ENCODE measurements at regions of chr7 and their contacts with region 1.

Region 1: DNA sequence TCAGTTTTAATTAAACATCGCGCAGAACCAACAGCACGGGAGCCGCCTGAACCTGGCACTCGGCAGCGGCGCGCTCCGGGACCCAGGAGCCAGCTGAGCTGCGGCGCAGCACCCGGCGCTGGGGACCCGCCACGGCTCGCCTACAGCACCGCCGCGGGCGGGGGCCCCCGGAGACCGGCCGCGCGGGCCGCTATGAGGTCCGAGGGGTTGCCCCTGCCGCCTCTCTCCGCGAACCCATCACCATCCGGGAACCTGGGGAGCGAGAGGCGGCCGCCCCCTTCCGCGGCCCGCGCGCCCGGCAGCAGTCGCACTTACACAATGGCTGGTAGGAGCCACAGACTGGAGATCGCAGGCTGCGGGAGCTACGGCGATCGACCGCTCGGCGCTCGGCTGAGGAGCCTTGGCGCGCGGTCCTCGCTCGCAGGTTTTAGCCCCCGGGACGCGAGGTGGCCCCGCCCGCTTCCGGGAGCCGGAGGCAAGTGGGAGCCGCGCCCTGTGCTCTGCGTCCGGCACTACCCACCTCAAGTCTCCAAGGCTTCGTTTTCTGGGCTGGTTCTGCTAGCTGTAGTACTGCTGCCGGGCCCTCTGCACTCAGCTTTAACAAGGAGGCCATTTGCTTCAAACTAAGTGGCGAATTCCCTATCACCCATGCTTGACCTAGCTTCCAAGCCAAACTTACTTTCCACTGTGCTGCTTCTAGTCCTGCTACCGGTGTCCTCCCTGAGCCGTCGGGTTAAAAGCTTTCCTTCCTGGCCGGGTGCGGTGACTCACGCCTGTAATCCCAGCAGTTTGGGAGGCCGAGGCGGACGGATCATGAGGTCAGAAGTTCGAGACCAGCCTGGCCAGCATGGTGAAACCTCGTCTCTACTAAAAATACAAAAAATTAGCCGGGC is at the start of gene TPK1:
- DNase-seq: peak; percentile 81 to 94 (median 89)
- ATAC-seq: peak; percentile 79 to 90
- H3K4me3 Mint-ChIP-seq: peak within 1 kb of the TSS; percentile 91 to 99 (median 98)
- H3K27ac Mint-ChIP-seq: peak within 1 kb of the TSS; percentile 98 to 99 (median 99)
- H3K4me1 Mint-ChIP-seq: peaks cover 9 to 44% (median 38%) of the 10 kb centered on the region in 4 donors
- H3K27me3 Mint-ChIP-seq: no peaks in the 10 kb centered on the region
- polyA plus RNA-seq, gene TPK1: 26.1 to 26.6 (median 26.2) TPM

Region 2: GRCh38 chr7:144771174-144771573 is 64.7 kb before region 1 on chr7:
- POLR2A ChIA-PET with region 1: interaction called, 21 read pairs
- DNase-seq: no peak
- ATAC-seq: no peak
- H3K4me3 Mint-ChIP-seq: no peak overlapping the region
- H3K27ac Mint-ChIP-seq: no peak overlapping the region
- H3K4me1 Mint-ChIP-seq: peaks cover 24 to 37% (median 31%) of the 10 kb centered on the region in 4 donors
- H3K27me3 Mint-ChIP-seq: no peaks in the 10 kb centered on the region

Region 3: GRCh38 chr7:144796919-144797318 is 39.0 kb before region 1 on chr7:
- POLR2A ChIA-PET with region 1: interaction called, 19 read pairs
- DNase-seq: no peak
- ATAC-seq: no peak
- H3K4me3 Mint-ChIP-seq: no peak overlapping the region
- H3K27ac Mint-ChIP-seq: peak overlapping the region in 1 of 10 donors; percentile 18
- H3K4me1 Mint-ChIP-seq: peaks cover 27 to 56% (median 37%) of the 10 kb centered on the region in 4 donors
- H3K27me3 Mint-ChIP-seq: no peaks in the 10 kb centered on the region

Region 4: GRCh38 chr7:144812379-144813283 is 23.3 kb before region 1 on chr7:
- POLR2A ChIA-PET with region 1: interaction called, 307 read pairs
- DNase-seq: peak in 9 of 10 donors; percentile 27 to 79 (median 63)
- ATAC-seq: peak; percentile 94 to 98
- H3K4me3 Mint-ChIP-seq: peak overlapping the region; percentile 56 to 84 (median 77)
- H3K27ac Mint-ChIP-seq: peak overlapping the region; percentile 66 to 97 (median 92)
- H3K4me1 Mint-ChIP-seq: peaks cover 32 to 73% (median 63%) of the 10 kb centered on the region in 4 donors
- H3K27me3 Mint-ChIP-seq: no peaks in the 10 kb centered on the region